Activated B cell treated with CpG ODN at 0.5 μM for 24 hours (primary cell): ENCODE measurements at regions of chr2 and their contacts with region 1.

Region 1: GRCh38 chr2:64523666-64524603 is at the start of gene AFTPH:
- DNase-seq: peak; percentile 97
- ATAC-seq: peak; percentile 87
- H3K4me3 Mint-ChIP-seq: peak within 1 kb of the TSS; percentile 99
- H3K27ac Mint-ChIP-seq: peak within 1 kb of the TSS; percentile 100
- H3K4me1 Mint-ChIP-seq: peaks cover 46% of the 10 kb centered on the region
- H3K27me3 Mint-ChIP-seq: no peaks in the 10 kb centered on the region
- CTCF ChIP-seq: no peak
- total RNA-seq, gene AFTPH: 76.2 and 81.3 TPM in 2 replicates

Region 2: DNA sequence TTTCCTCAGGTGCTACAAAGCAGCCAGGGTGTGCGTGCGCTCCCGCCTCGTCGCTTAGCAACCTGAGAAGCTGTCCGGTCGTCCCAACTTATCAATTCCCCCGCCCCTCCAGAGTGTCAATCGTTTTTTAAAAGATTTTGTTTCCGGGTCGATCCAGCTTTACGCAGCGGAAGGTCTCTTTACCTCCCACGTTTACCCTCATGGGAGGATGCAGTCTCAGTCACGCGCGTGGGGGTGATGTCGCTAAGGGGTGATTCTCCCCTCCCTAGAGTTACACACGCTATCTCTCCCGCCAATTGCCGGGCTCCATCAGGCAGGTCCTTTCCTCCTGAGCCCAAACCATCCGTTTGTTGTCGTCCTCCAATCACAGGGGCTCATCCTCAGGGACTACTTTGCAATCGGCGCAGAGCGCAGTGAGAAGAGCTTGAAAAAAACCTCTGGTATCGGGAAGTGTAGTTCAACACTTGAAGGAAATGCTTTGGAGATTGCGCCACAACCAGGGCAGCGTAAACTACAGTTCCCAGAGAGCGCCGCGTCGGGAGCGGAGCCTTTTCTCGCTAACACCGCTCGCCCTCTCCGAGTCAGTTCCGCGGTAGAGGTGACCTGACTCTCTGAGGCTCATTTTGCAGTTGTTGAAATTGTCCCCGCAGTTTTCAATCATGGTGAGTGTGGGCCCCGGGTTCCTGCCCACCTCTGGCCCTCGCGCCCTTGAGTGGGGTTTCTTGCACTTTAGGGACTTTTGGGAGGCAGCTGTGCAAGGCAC is 935.4 kb before region 1 on chr2 and contains the starts of genes MDH1 and WDPCP:
- CTCF ChIA-PET with region 1: no interaction called
- POLR2A ChIA-PET with region 1: no interaction called
- intact Hi-C with region 1: loop called (anchors 1 kb)
- DNase-seq: peak; percentile 80
- ATAC-seq: peak; percentile 86
- H3K4me3 Mint-ChIP-seq: peak within 1 kb of the TSS; percentile 97
- H3K27ac Mint-ChIP-seq: peak within 1 kb of the TSS; percentile 97
- H3K4me1 Mint-ChIP-seq: peaks cover 47% of the 10 kb centered on the region
- H3K27me3 Mint-ChIP-seq: no peaks in the 10 kb centered on the region
- CTCF ChIP-seq: no peak
- total RNA-seq, gene MDH1: 117 and 120 TPM in 2 replicates
- total RNA-seq, gene WDPCP: 10.0 and 12.9 TPM in 2 replicates

Region 3: DNA sequence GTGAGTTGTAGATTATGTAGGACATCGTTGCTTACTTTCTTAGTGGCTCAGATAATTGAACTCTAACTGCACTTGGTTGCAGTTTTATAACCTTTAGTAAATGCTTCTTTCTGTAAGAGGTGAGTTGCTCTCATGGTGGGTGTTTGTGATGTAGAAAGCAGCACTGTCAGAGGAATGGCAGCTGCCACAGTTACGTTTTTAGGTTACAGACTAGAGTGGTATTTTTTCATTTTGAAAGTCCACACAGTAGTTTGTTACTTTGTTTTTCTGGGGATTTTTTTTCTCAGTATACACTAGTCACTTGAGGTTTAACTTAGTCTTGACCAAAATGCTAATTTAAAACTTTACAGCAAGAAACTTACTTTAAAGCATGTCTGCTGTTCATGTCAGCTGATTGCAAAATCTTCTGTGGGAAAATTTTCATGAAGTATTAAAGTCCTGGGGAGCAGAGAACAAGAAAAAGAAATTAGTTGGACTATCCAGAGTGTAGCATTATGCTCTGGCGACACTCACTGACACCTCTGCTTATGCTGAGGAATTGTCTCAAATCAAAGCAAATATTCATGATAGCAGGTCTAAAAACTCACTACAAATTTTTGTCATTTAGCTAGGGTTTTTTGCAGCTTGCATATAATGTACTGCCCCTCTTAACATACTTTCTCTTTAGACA is 15.0 kb after region 1 on chr2:
- CTCF ChIA-PET with region 1: interaction called, 7 read pairs
- POLR2A ChIA-PET with region 1: interaction called, 19 read pairs
- intact Hi-C with region 1: loop called (anchors 1 kb)
- DNase-seq: no peak
- ATAC-seq: no peak
- H3K4me3 Mint-ChIP-seq: no peak overlapping the region
- H3K27ac Mint-ChIP-seq: peak overlapping the region; percentile 31
- H3K4me1 Mint-ChIP-seq: peaks cover 77% of the 10 kb centered on the region
- H3K27me3 Mint-ChIP-seq: no peaks in the 10 kb centered on the region
- CTCF ChIP-seq: no peak

Region 4: GRCh38 chr2:64635976-64636911 is 112.3 kb after region 1 on chr2:
- CTCF ChIA-PET with region 1: no interaction called
- POLR2A ChIA-PET with region 1: no interaction called
- intact Hi-C with region 1: loop called (anchors 1 kb)
- DNase-seq: no peak
- ATAC-seq: peak; percentile 48
- H3K4me3 Mint-ChIP-seq: peak overlapping the region; percentile 68
- H3K27ac Mint-ChIP-seq: peak overlapping the region; percentile 94
- H3K4me1 Mint-ChIP-seq: peaks cover 71% of the 10 kb centered on the region
- H3K27me3 Mint-ChIP-seq: no peaks in the 10 kb centered on the region
- CTCF ChIP-seq: no peak

Region 5: DNA sequence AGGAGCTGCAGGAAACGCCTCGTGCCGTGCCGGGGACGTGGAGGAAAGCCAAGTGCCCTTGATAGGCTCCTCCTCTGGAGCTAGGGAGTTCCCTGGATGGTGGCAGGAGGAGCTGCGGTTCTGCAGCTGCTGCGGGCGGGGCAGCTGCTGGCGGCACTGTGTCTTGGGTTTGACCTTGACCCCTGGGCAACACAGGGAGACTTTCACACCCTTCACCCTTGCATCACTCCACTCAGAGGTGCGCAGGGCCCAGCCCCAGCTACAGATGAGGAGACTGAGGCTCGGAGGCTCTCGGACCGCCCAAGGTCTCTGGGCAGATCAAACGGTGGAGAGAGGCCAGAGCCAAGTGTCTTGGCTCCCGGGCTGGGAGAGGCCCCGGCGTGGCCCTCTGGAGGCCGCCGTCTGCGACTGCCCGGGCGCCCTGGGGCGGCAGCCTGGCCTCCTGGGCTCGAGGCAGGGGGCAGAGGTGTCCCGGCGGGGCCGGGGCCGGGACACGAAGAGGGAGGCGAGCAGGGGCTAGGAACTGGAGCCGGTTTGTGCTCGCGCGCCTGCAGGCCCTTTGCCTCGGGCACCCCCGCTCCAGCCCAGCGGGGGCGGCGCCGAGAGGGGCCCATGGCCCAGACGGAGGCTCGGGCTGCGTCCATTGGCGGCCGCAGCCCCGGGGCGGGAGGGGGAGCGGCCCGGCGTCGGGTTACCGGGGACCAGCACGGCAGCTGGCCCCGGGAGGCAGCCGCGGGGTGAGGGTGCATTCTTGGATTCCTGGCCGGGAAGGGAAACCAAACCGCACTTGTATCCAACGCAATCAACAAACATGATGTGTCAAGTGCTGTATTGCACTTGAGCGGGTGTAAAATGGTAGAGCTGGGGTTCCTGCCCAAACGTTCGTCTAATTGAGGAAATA is 335.6 kb after region 1 on chr2:
- CTCF ChIA-PET with region 1: interaction called, 7 read pairs
- POLR2A ChIA-PET with region 1: interaction called, 22 read pairs
- intact Hi-C with region 1: no loop called
- DNase-seq: peak; percentile 44
- ATAC-seq: peak; percentile 19
- H3K4me3 Mint-ChIP-seq: peak overlapping the region; percentile 76
- H3K27ac Mint-ChIP-seq: peak overlapping the region; percentile 94
- H3K4me1 Mint-ChIP-seq: peaks cover 36% of the 10 kb centered on the region
- H3K27me3 Mint-ChIP-seq: no peaks in the 10 kb centered on the region
- CTCF ChIP-seq: no peak

Region 6: GRCh38 chr2:65024149-65024829 is 500.4 kb after region 1 on chr2:
- CTCF ChIA-PET with region 1: interaction called, 5 read pairs
- POLR2A ChIA-PET with region 1: no interaction called
- intact Hi-C with region 1: loop called (anchors 1 kb)
- DNase-seq: no peak
- ATAC-seq: no peak
- H3K4me3 Mint-ChIP-seq: peak overlapping the region; percentile 29
- H3K27ac Mint-ChIP-seq: peak overlapping the region; percentile 63
- H3K4me1 Mint-ChIP-seq: peaks cover 58% of the 10 kb centered on the region
- H3K27me3 Mint-ChIP-seq: no peaks in the 10 kb centered on the region
- CTCF ChIP-seq: no peak